H1 (cell line): ENCODE measurements at regions of chr14 and their contacts with region 1.

Region 1: DNA sequence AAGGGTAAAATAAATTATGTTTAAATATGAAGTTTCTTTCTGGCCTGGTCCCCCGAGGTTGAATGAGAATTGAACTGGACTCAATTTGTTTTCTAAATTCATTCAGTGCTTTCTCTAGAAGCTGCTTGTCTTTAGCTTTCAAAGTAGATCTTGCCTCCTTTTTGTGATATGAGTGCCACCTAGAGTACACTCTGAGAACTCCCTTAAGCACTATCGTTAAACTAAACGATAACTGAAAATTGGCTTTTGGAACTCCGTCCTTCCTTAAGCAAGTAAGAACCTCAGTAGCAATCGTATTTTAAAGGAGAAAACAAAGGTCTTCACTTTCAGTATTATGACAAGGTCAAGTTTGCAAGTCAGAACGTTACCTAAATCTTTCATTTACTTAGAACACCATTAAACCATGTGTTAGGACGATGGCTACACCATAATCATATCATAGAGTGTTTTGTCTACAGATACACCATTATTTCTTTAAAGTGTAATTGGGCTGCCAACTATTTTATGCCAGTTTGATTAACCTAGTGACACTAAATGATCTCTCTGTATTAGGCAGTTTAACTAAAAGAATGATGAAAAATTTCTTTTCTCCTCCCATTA is 364.8 kb downstream of the SNAPC1 start:
- DNase-seq: no peak
- H3K4me3 ChIP-seq: no peak overlapping the region
- H3K27ac ChIP-seq: no peak overlapping the region
- H3K4me1 ChIP-seq: no peaks in the 10 kb centered on the region
- H3K27me3 ChIP-seq: no peaks in the 10 kb centered on the region
- CTCF ChIP-seq: peak in 2 of 3 experiments; percentile 64 to 72; a peak in 2 of 4 replicates
- EP300 ChIP-seq: no peak
- POLR2A ChIP-seq: no peak
- RAD21 ChIP-seq: peak; percentile 90 to 92

Region 2: GRCh38 chr14:61694830-61695694 is 431.9 kb before region 1 on chr14 and contains the start of gene HIF1A:
- CTCF ChIA-PET with region 1: no interaction called
- POLR2A ChIA-PET with region 1: no interaction called
- DNase-seq: peak; percentile 91 to 97
- H3K4me3 ChIP-seq: peak within 1 kb of the TSS; percentile 96 to 100 (median 98)
- H3K27ac ChIP-seq: peak within 1 kb of the TSS; percentile 97
- H3K4me1 ChIP-seq: peaks cover 0 to 6% (median 1%) of the 10 kb centered on the region in 4 experiments; a peak in 4 of 7 replicates
- H3K27me3 ChIP-seq: no peaks in the 10 kb centered on the region
- CTCF ChIP-seq: peak in 2 of 3 experiments; percentile 11 to 22; a peak in 2 of 4 replicates
- EP300 ChIP-seq: no peak
- POLR2A ChIP-seq: peak; percentile 98 to 99
- RAD21 ChIP-seq: peak; percentile 18 to 26; a peak in 2 of 4 replicates
- total RNA-seq, gene HIF1A: 175 and 178 TPM in 2 replicates

Region 3: GRCh38 chr14:61860294-61860918 is 266.6 kb before region 1 on chr14:
- CTCF ChIA-PET with region 1: interaction called, 21 read pairs
- POLR2A ChIA-PET with region 1: no interaction called
- DNase-seq: peak in 1 of 2 experiments; percentile 82
- H3K4me3 ChIP-seq: no peak overlapping the region
- H3K27ac ChIP-seq: no peak overlapping the region
- H3K4me1 ChIP-seq: no peaks in the 10 kb centered on the region
- H3K27me3 ChIP-seq: no peaks in the 10 kb centered on the region
- CTCF ChIP-seq: peak; percentile 55 to 68 (median 57)
- EP300 ChIP-seq: no peak
- POLR2A ChIP-seq: no peak
- RAD21 ChIP-seq: peak; percentile 57 to 62

Region 4: DNA sequence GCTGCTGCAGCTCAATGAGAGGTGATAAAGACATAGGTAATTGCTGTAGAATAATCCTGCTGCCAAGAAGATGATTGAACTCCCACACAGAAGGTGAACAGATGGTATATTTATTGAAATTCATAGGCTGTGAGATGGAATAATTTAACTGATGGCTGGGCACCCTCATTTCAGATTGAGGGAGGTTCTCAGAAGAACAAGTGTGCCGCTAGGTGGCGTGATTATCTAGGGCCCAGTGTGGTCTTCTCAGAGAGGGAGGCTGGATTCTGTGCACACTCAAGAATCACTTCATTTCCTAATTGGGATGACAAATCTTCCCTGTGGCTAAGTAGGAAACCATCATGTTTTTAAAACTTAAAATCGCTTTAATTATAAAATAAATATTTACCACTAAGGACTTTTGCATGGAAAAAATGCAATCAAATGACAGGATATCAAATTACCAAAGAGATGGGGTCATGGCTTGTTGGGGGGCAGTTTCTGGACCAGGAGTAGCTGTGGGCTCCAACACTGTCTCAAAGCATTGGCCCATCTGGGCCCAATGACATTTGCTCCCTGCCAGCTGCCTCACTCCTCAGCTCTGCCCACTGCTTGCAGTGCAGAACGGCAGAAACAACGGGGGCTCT is 232.4 kb before region 1 on chr14:
- CTCF ChIA-PET with region 1: interaction called, 49 read pairs
- POLR2A ChIA-PET with region 1: no interaction called
- DNase-seq: peak in 1 of 2 experiments; percentile 69
- H3K4me3 ChIP-seq: no peak overlapping the region
- H3K27ac ChIP-seq: no peak overlapping the region
- H3K4me1 ChIP-seq: 0 out of 7 replicates have a peak, but pooled peaks cover 0 to 11% (median 0%) of the 10 kb centered on the region in 4 experiments
- H3K27me3 ChIP-seq: no peaks in the 10 kb centered on the region
- CTCF ChIP-seq: peak; percentile 59 to 75 (median 59)
- EP300 ChIP-seq: no peak
- POLR2A ChIP-seq: no peak
- RAD21 ChIP-seq: peak; percentile 64 to 72

Region 5: DNA sequence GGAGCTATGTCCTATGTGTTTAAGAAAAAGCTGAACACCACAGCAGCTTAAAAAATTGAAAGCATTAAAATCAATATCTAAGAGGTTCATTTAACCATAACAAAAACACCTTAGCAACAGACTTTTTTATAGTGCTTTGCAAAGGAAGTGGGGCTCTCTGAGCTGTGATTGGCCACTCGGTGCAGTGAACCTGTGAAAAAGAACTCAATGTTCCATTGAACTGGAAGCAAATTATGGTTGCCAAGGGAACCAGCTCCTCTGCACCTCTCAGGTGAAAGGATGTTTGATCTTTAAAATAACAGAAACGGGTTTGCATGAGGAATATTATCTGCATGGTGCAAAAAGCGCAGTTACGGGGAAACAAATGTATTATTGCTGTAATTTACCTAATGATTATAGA is 215.4 kb before region 1 on chr14:
- CTCF ChIA-PET with region 1: interaction called, 11 read pairs
- POLR2A ChIA-PET with region 1: no interaction called
- DNase-seq: no peak
- H3K4me3 ChIP-seq: no peak overlapping the region
- H3K27ac ChIP-seq: no peak overlapping the region
- H3K4me1 ChIP-seq: no peaks in the 10 kb centered on the region
- H3K27me3 ChIP-seq: no peaks in the 10 kb centered on the region
- CTCF ChIP-seq: no peak
- EP300 ChIP-seq: no peak
- POLR2A ChIP-seq: no peak
- RAD21 ChIP-seq: no peak

Region 6: GRCh38 chr14:61925043-61925442 is 201.9 kb before region 1 on chr14:
- CTCF ChIA-PET with region 1: interaction called, 108 read pairs
- POLR2A ChIA-PET with region 1: no interaction called
- DNase-seq: no peak
- H3K4me3 ChIP-seq: no peak overlapping the region
- H3K27ac ChIP-seq: no peak overlapping the region
- H3K4me1 ChIP-seq: peaks cover 0 to 7% (median 1%) of the 10 kb centered on the region in 4 experiments; a peak in 5 of 7 replicates
- H3K27me3 ChIP-seq: no peaks in the 10 kb centered on the region; a peak in 1 of 7 replicates
- CTCF ChIP-seq: peak in 2 of 3 experiments; percentile 60 to 68; a peak in 3 of 4 replicates
- EP300 ChIP-seq: no peak
- POLR2A ChIP-seq: no peak
- RAD21 ChIP-seq: peak; percentile 75 to 81